Heart left ventricle (tissue), 16 donors: ENCODE measurements at regions of chr9 and their contacts with region 1.

Region 1: GRCh38 chr9:14314929-14315645 is 1.1 kb upstream of the NFIB start:
- DNase-seq: peak; percentile 96 to 98 (median 97)
- ATAC-seq: peak; percentile 67 to 87 (median 80)
- H3K4me3 ChIP-seq: peak overlapping the region; percentile 66 to 90 (median 82)
- H3K27ac ChIP-seq: peak overlapping the region; percentile 93 to 100 (median 99)
- H3K4me1 ChIP-seq: peaks cover 5 to 53% (median 34%) of the 10 kb centered on the region in 12 donors
- H3K27me3 ChIP-seq: peaks cover 0 to 47% (median 0%) of the 10 kb centered on the region in 9 donors
- CTCF ChIP-seq: no peak
- POLR2A ChIP-seq: peak; percentile 40 to 82

Region 2: GRCh38 chr9:13863112-13863511 is 452.0 kb before region 1 on chr9:
- intact Hi-C with region 1: loop called in 1 of 10 experiments (anchors 10 kb)
- DNase-seq: peak; percentile 63 to 80 (median 77)
- ATAC-seq: peak; percentile 85 to 97 (median 95)
- H3K4me3 ChIP-seq: no peak overlapping the region
- H3K27ac ChIP-seq: peak overlapping the region; percentile 12 to 56 (median 38)
- H3K4me1 ChIP-seq: peaks cover 0 to 39% (median 21%) of the 10 kb centered on the region in 12 donors
- H3K27me3 ChIP-seq: no peaks in the 10 kb centered on the region
- CTCF ChIP-seq: no peak
- POLR2A ChIP-seq: no peak

Region 3: DNA sequence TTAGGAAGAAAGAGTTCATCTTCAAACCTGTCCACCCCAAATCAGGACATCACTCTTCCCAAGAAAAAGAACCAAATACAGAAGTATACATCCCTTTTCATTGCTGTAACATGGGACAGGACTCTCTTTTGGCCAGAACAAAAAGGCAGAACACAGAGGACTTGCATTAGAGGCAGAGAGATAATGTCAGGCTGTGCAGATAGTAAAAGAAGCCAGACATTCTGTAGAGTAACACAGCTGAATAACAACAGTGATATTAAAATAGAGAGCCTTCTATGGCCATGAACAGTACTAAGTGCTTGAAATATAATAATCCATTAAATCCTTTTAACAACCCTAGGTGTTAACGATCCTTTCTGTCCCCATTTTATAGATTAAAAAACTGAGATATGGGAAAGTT is 438.3 kb before region 1 on chr9:
- intact Hi-C with region 1: no loop called
- DNase-seq: no peak
- ATAC-seq: peak in 3 of 4 donors; percentile 51 to 85 (median 64)
- H3K4me3 ChIP-seq: no peak overlapping the region
- H3K27ac ChIP-seq: peak overlapping the region in 1 of 12 donors; percentile 10
- H3K4me1 ChIP-seq: peaks cover 0 to 8% (median 0%) of the 10 kb centered on the region in 12 donors
- H3K27me3 ChIP-seq: no peaks in the 10 kb centered on the region
- CTCF ChIP-seq: no peak
- POLR2A ChIP-seq: no peak

Region 4: DNA sequence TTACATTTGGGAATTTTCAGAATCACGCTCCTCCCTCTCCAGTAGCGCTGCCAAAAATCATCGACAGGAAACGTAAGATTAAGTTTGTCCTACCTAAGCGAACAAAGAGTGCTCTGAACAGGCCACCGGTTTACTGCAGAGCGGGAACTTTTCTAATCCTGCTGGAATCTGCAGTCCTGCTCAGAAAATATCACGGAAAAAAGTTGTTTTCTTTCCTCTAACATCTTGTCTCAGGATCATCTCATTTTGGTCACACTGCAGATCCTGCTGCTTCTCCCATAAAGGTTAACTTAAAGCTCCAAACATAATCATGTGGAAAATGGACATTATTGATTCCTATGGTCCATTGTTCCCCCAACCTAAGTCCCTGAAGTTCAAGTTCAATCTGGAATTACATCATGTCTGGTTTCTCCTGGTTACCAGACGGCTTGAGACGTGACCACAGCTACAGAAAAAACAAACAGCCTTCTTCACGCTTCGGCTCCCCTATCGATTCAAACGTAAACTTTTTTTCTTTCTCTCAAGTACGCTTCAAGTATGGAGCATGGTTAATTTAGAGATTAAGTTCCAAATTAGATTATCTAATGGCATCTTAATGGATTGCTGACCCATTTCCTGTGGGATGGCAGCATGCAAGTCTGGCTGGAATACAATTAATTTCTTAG is 218.7 kb before region 1 on chr9:
- intact Hi-C with region 1: loop called in 8 of 10 experiments (anchors 2 to 5 kb)
- DNase-seq: peak in 4 of 5 donors; percentile 40 to 53 (median 42)
- ATAC-seq: peak; percentile 81 to 87 (median 84)
- H3K4me3 ChIP-seq: peak overlapping the region in 10 of 12 donors; percentile 9 to 48 (median 32)
- H3K27ac ChIP-seq: peak overlapping the region; percentile 39 to 90 (median 82)
- H3K4me1 ChIP-seq: peaks cover 0 to 71% (median 49%) of the 10 kb centered on the region in 12 donors
- H3K27me3 ChIP-seq: no peaks in the 10 kb centered on the region
- CTCF ChIP-seq: no peak
- POLR2A ChIP-seq: no peak

Region 5: GRCh38 chr9:14198841-14199455 is 116.1 kb before region 1 on chr9:
- intact Hi-C with region 1: loop called in 2 of 10 experiments (anchors 5 to 10 kb)
- DNase-seq: peak; percentile 74 to 83 (median 78)
- ATAC-seq: peak; percentile 74 to 91 (median 86)
- H3K4me3 ChIP-seq: peak overlapping the region in 6 of 12 donors; percentile 1 to 32 (median 8)
- H3K27ac ChIP-seq: peak overlapping the region; percentile 21 to 83 (median 68)
- H3K4me1 ChIP-seq: peaks cover 16 to 98% (median 77%) of the 10 kb centered on the region in 12 donors
- H3K27me3 ChIP-seq: no peaks in the 10 kb centered on the region
- CTCF ChIP-seq: no peak
- POLR2A ChIP-seq: no peak

Region 6: DNA sequence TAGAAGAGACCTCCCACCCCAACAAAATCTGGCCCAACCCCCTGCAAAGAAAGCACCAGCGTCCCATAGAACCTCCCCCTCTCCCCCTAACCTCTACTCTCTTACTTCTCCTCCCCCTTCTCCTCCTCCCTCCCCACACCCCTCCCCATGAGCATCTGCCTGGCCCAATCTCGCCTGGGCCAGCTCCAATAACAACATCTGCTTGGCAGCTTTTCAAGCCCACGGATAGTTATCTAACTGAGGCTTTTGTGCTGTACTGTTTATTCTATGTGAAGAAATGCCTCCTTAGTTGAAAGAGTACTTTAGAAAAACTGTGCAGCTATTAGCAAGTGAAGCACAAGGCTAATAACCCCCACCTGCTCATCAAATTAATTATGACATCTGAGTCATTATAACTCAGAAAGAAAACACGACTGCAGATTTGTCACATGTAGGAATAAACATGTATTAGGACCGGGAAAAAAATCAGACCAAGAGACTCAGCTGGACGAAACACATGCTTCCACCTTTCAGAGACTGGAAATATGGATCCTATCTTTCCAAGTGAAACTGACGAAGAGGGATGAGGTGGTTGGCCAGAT is 43.9 kb before region 1 on chr9:
- intact Hi-C with region 1: loop called in 4 of 10 experiments (anchors 5 kb)
- DNase-seq: peak; percentile 72 to 79 (median 77)
- ATAC-seq: peak; percentile 44 to 74 (median 60)
- H3K4me3 ChIP-seq: no peak overlapping the region
- H3K27ac ChIP-seq: peak overlapping the region in 10 of 12 donors; percentile 8 to 68 (median 44)
- H3K4me1 ChIP-seq: peaks cover 14 to 79% (median 63%) of the 10 kb centered on the region in 12 donors
- H3K27me3 ChIP-seq: no peaks in the 10 kb centered on the region
- CTCF ChIP-seq: no peak
- POLR2A ChIP-seq: no peak

Region 7: GRCh38 chr9:14347406-14348122 is 32.5 kb after region 1 on chr9:
- intact Hi-C with region 1: loop called in 6 of 10 experiments (anchors 2 to 5 kb)
- DNase-seq: peak; percentile 63 to 76 (median 69)
- ATAC-seq: peak; percentile 36 to 59 (median 50)
- H3K4me3 ChIP-seq: peak overlapping the region; percentile 41 to 72 (median 59)
- H3K27ac ChIP-seq: peak overlapping the region; percentile 76 to 94 (median 87)
- H3K4me1 ChIP-seq: peaks cover 11 to 73% (median 42%) of the 10 kb centered on the region in 12 donors
- H3K27me3 ChIP-seq: peaks cover 0 to 50% (median 0%) of the 10 kb centered on the region in 9 donors
- CTCF ChIP-seq: peak in 3 of 12 donors; percentile 19 to 52 (median 52)
- POLR2A ChIP-seq: peak in 1 of 2 donors; percentile 52